ENCODE measurements at regions of chr4 and their contacts with region 1.

Region 1: GRCh38 chr4:102500696-102501446 is at the start of gene NFKB1:
- DNase-seq: peak; percentile 60 to 97 (median 78)
- ATAC-seq: peak; percentile 67
- H3K4me3 ChIP-seq: peak within 1 kb of the TSS; percentile 88 to 93
- H3K4me3 Mint-ChIP-seq: peak within 1 kb of the TSS; percentile 95
- H3K27ac ChIP-seq: peak within 1 kb of the TSS; percentile 95 to 100
- H3K27ac Mint-ChIP-seq: peak within 1 kb of the TSS; percentile 98
- H3K4me1 ChIP-seq: peaks cover 19% of the 10 kb centered on the region
- H3K4me1 Mint-ChIP-seq: peaks cover 29% of the 10 kb centered on the region
- H3K27me3 ChIP-seq: no peaks in the 10 kb centered on the region
- H3K27me3 Mint-ChIP-seq: no peaks in the 10 kb centered on the region
- CTCF ChIP-seq: no peak
- total RNA-seq, gene NFKB1: 278 to 289 TPM

Region 2: DNA sequence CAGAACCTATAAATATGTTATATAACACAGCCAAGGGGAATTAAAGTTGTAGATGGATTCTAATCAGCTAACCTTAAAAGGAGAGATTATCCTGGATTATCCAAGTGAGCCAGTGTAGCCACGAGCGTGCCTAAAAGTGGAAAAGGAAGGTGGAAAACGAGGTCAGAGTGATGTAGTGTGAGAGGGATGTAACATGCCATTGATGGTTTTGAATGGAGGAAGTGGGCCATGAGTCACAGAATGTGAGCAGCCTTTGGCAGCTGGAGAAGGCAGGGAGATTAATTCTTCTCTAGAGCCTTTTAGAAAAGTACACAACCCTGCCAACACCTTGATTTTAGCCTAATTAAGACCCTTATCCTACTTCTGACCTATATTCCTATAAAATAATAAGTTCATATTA is 304.6 kb before region 1 on chr4:
- CTCF ChIA-PET with region 1: no interaction called
- POLR2A ChIA-PET with region 1: no interaction called
- intact Hi-C with region 1: no loop called
- DNase-seq: no peak
- ATAC-seq: no peak
- H3K4me3 ChIP-seq: no peak overlapping the region
- H3K4me3 Mint-ChIP-seq: no peak overlapping the region
- H3K27ac ChIP-seq: no peak overlapping the region
- H3K27ac Mint-ChIP-seq: no peak overlapping the region
- H3K4me1 ChIP-seq: peaks cover 15% of the 10 kb centered on the region
- H3K4me1 Mint-ChIP-seq: peaks cover 17% of the 10 kb centered on the region
- H3K27me3 ChIP-seq: no peaks in the 10 kb centered on the region
- H3K27me3 Mint-ChIP-seq: peaks cover 3% of the 10 kb centered on the region
- CTCF ChIP-seq: no peak

Region 3: GRCh38 chr4:102430461-102430910 is 70.4 kb before region 1 on chr4:
- CTCF ChIA-PET with region 1: interaction called, 5 read pairs
- POLR2A ChIA-PET with region 1: no interaction called
- intact Hi-C with region 1: loop called in 1 of 2 experiments (anchors 5 kb)
- DNase-seq: peak in 1 of 9 experiments; percentile 19
- ATAC-seq: no peak
- H3K4me3 ChIP-seq: peak overlapping the region; percentile 57 to 58
- H3K4me3 Mint-ChIP-seq: peak overlapping the region; percentile 88
- H3K27ac ChIP-seq: peak overlapping the region; percentile 34 to 55
- H3K27ac Mint-ChIP-seq: no peak overlapping the region
- H3K4me1 ChIP-seq: peaks cover 4% of the 10 kb centered on the region
- H3K4me1 Mint-ChIP-seq: peaks cover 8% of the 10 kb centered on the region
- H3K27me3 ChIP-seq: no peaks in the 10 kb centered on the region
- H3K27me3 Mint-ChIP-seq: no peaks in the 10 kb centered on the region
- CTCF ChIP-seq: no peak

Region 4: GRCh38 chr4:102525097-102525496 is 24.2 kb after region 1 on chr4:
- CTCF ChIA-PET with region 1: interaction called, 6 read pairs
- POLR2A ChIA-PET with region 1: interaction called, 4 read pairs
- intact Hi-C with region 1: loop called (anchors 2 kb)
- DNase-seq: peak in 1 of 9 experiments; percentile 51
- ATAC-seq: no peak
- H3K4me3 ChIP-seq: no peak overlapping the region
- H3K4me3 Mint-ChIP-seq: no peak overlapping the region
- H3K27ac ChIP-seq: no peak overlapping the region
- H3K27ac Mint-ChIP-seq: peak overlapping the region; percentile 49
- H3K4me1 ChIP-seq: peaks cover 80% of the 10 kb centered on the region
- H3K4me1 Mint-ChIP-seq: peaks cover 92% of the 10 kb centered on the region
- H3K27me3 ChIP-seq: no peaks in the 10 kb centered on the region
- H3K27me3 Mint-ChIP-seq: no peaks in the 10 kb centered on the region
- CTCF ChIP-seq: no peak

Region 5: DNA sequence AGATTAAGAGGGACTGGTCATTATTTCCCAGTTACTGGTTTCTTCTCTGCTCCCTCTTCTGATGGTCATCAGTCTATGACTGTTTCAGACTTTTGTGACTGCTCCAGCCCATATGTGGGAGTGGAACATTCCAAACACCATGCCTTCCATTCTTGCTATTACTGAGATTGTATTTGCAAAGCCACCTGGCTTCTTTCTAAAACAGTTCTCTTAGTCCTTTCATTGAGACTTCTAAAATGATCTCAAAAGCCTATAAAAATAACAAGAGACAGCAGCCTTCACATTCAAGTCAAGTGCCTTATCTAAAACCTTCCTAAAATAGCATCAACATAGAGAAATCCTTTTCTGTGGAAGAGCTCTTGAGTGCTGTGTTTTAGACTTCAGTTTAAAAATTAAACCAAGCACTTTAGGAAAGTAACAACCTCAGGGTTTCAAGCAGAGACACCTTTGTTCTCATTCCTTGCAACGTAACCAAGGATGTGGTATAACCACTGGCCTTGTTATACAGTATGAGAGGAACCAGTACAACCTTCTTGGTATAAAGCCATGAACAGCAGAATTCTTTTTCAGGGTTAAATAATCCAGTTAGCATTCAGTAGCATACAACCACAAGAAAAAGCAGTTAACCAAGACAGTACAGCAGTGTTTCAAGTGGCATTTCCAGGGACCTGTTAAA is 97.4 kb after region 1 on chr4:
- CTCF ChIA-PET with region 1: no interaction called
- POLR2A ChIA-PET with region 1: no interaction called
- intact Hi-C with region 1: loop called in 1 of 2 experiments (anchors 5 kb)
- DNase-seq: peak in 2 of 9 experiments; percentile 53 to 71
- ATAC-seq: peak; percentile 84
- H3K4me3 ChIP-seq: peak overlapping the region in 1 of 2 experiments; percentile 7
- H3K4me3 Mint-ChIP-seq: peak overlapping the region; percentile 24
- H3K27ac ChIP-seq: peak overlapping the region; percentile 12 to 52
- H3K27ac Mint-ChIP-seq: peak overlapping the region; percentile 90
- H3K4me1 ChIP-seq: peaks cover 62% of the 10 kb centered on the region
- H3K4me1 Mint-ChIP-seq: peaks cover 74% of the 10 kb centered on the region
- H3K27me3 ChIP-seq: no peaks in the 10 kb centered on the region
- H3K27me3 Mint-ChIP-seq: no peaks in the 10 kb centered on the region
- CTCF ChIP-seq: no peak

Region 6: DNA sequence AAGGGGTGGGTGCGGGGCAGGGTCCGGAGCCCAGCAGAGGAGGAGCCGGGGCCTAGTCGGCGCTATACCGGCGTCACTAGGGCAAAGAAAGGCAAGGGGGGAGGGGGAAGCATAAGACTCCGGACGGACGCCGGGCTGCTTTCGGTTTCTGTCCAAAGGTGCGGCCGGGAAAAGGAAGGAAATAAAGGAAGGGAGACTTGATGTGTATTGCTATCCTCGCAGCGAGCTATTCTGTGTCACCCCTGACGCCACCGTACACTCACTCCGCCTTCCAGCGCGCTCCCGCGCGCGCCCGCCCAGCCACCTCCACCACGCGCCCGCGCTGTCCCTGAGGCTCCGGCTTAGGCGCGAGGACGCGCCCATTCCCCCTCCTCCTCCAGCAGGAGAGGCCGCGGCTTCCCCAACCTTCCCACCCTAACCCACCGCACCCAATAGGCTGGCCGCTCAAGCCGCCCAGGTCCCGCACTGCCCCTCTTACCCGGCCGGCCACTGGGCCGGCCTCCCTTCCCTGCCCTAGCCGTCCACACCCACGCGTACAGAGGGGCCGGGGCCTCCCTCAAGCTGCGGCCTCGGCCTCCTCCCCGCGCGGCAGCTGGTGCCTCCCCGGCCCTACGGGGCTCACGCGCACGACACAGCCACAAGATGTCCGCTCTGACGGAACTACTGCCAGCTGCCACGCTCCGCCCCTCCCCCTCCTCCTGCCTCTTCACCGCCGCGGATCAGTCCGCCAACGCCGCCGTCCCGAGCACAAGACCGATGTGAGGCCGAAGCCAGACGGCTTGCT is 326.2 kb after region 1 on chr4 and contains the start of gene UBE2D3:
- CTCF ChIA-PET with region 1: no interaction called
- POLR2A ChIA-PET with region 1: interaction called, 22 read pairs
- intact Hi-C with region 1: loop called in 1 of 2 experiments (anchors 2 kb)
- DNase-seq: peak; percentile 90 to 98 (median 95)
- ATAC-seq: peak; percentile 49
- H3K4me3 ChIP-seq: peak within 1 kb of the TSS; percentile 80 to 90
- H3K4me3 Mint-ChIP-seq: no peak within 1 kb of the TSS
- H3K27ac ChIP-seq: peak within 1 kb of the TSS; percentile 99 to 100
- H3K27ac Mint-ChIP-seq: no peak within 1 kb of the TSS
- H3K4me1 ChIP-seq: peaks cover 37% of the 10 kb centered on the region
- H3K4me1 Mint-ChIP-seq: peaks cover 39% of the 10 kb centered on the region
- H3K27me3 ChIP-seq: no peaks in the 10 kb centered on the region
- H3K27me3 Mint-ChIP-seq: no peaks in the 10 kb centered on the region
- CTCF ChIP-seq: no peak
- total RNA-seq, gene UBE2D3: 752 to 758 TPM

Region 7: DNA sequence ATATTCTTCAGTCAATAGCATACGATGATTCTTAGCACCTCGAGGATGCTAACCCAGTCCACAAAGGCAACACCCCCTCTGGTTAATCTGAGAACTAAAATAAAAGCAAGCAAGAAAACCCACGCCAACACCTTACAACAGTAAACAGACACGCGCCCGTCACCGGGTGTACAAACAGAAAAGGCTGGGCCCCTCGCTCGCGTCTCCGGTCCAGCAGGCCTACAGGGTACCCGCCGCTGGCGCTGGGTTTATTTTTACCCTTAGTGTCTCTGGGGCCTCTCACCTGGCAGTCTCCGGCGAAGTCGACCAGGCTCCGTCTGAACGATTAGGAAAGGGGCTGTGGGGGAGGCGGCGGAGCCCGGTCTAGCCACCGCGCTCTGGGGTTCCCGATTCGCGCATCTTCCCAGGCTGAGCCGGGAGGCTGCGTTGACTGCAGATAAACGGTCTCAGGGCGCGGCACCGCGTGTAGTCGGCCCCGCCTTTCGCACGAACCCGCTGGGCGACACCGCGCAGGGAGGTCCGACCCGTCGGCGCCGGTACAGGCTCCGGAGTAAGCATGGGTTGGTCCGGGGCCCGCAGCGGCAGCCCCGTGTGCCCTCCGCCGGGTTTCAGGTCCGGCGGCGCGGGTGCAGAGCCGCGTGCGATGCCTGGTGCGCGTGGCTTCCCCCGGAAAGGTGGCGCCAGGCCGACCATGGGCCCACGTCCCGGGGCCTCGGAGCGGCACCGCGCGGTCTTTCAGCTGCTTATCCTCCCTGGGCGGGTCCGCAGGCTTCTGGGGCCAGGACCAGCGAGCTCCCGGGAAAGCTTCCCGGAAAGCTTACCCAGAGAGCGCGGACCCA is 575.2 kb after region 1 on chr4:
- CTCF ChIA-PET with region 1: no interaction called
- POLR2A ChIA-PET with region 1: no interaction called
- intact Hi-C with region 1: loop called (anchors 5 kb)
- DNase-seq: peak; percentile 39 to 84 (median 64)
- ATAC-seq: peak; percentile 79
- H3K4me3 ChIP-seq: peak overlapping the region; percentile 80
- H3K4me3 Mint-ChIP-seq: peak overlapping the region; percentile 94
- H3K27ac ChIP-seq: peak overlapping the region; percentile 89 to 95
- H3K27ac Mint-ChIP-seq: peak overlapping the region; percentile 99
- H3K4me1 ChIP-seq: peaks cover 25% of the 10 kb centered on the region
- H3K4me1 Mint-ChIP-seq: peaks cover 49% of the 10 kb centered on the region
- H3K27me3 ChIP-seq: no peaks in the 10 kb centered on the region
- H3K27me3 Mint-ChIP-seq: no peaks in the 10 kb centered on the region
- CTCF ChIP-seq: no peak

Measured in CD8-positive, alpha-beta T cell (primary cell).